Panc1 (cell line): ENCODE measurements at regions of chr12 and their contacts with region 1.

Region 1: GRCh38 chr12:50174971-50175715 is 8.0 kb upstream of the CERS5 start:
- DNase-seq: peak; percentile 53
- ATAC-seq: no peak
- H3K4me3 ChIP-seq: no peak overlapping the region
- H3K27ac ChIP-seq: no peak overlapping the region
- H3K4me1 ChIP-seq: no peaks in the 10 kb centered on the region
- H3K27me3 ChIP-seq: no peaks in the 10 kb centered on the region
- CTCF ChIP-seq: no peak; the same call in 1 of the 2 replicates

Region 2: GRCh38 chr12:50074936-50075807 is 100.0 kb before region 1 on chr12:
- CTCF ChIA-PET with region 1: interaction called, 3 read pairs
- POLR2A ChIA-PET with region 1: interaction called, 7 read pairs
- in situ Hi-C with region 1: no loop called
- intact Hi-C with region 1: loop called (anchors 1 kb)
- DNase-seq: no peak
- ATAC-seq: peak; percentile 93
- H3K4me3 ChIP-seq: no peak overlapping the region
- H3K27ac ChIP-seq: no peak overlapping the region
- H3K4me1 ChIP-seq: 0 out of 2 replicates have a peak, but pooled peaks cover 3% of the 10 kb centered on the region
- H3K27me3 ChIP-seq: no peaks in the 10 kb centered on the region
- CTCF ChIP-seq: peak; percentile 95

Region 3: GRCh38 chr12:50111693-50112455 is 63.3 kb before region 1 on chr12 and contains the start of gene COX14:
- CTCF ChIA-PET with region 1: interaction called, 15 read pairs
- POLR2A ChIA-PET with region 1: interaction called, 6 read pairs
- in situ Hi-C with region 1: no loop called
- intact Hi-C with region 1: no loop called
- DNase-seq: peak; percentile 99
- ATAC-seq: peak; percentile 94
- H3K4me3 ChIP-seq: peak within 1 kb of the TSS; percentile 64 to 99
- H3K27ac ChIP-seq: peak within 1 kb of the TSS; percentile 71
- H3K4me1 ChIP-seq: peaks cover 15% of the 10 kb centered on the region
- H3K27me3 ChIP-seq: no peaks in the 10 kb centered on the region
- CTCF ChIP-seq: peak; percentile 99
- total RNA-seq, gene COX14: 74.5 TPM

Region 4: DNA sequence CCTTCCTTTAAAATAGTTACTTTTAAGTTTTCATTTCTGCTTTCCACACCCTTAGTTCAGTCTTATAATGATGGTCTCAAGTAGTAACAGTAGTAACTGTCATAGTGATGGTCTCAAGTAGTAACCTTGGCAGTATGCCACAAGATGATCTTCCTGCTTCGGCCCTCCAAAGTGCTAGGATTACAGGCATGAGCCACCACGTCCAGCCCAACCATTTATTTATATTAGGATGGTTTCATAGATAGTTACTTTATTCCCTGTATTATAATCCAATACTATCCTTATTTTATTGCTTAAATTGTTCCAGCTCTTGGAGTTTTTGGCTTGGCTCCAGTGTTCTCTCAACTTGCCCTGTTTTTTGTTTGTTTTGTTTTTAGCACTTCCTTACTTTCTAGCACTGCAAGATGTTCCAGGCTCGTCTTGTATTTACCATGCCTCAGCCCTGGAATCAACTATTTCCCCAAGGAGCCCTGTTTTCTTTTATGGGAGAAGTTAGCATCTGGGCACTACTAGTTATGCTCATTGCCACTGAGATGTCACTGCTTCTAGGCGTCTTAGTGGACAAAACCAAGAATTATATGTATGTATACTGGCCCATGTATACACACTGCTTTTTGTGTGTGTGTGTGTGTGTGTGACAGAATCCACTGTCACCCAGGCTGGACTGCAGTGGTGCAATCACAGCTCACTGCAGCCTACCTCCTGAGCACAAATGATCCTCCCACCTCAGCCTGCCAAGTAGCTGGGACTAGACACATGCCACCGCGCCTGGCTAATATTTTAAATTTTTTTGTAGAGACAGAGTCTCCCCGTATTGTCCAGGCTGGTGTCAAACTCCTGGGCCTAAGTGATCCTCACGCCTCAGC is 82.8 kb after region 1 on chr12:
- CTCF ChIA-PET with region 1: interaction called, 20 read pairs
- POLR2A ChIA-PET with region 1: interaction called, 4 read pairs
- in situ Hi-C with region 1: no loop called
- intact Hi-C with region 1: no loop called
- DNase-seq: no peak
- ATAC-seq: peak; percentile 67
- H3K4me3 ChIP-seq: no peak overlapping the region
- H3K27ac ChIP-seq: peak overlapping the region; percentile 73
- H3K4me1 ChIP-seq: peaks cover 85% of the 10 kb centered on the region
- H3K27me3 ChIP-seq: no peaks in the 10 kb centered on the region
- CTCF ChIP-seq: no peak